ENCODE measurements at regions of chr11 and their contacts with region 1.

Region 1: DNA sequence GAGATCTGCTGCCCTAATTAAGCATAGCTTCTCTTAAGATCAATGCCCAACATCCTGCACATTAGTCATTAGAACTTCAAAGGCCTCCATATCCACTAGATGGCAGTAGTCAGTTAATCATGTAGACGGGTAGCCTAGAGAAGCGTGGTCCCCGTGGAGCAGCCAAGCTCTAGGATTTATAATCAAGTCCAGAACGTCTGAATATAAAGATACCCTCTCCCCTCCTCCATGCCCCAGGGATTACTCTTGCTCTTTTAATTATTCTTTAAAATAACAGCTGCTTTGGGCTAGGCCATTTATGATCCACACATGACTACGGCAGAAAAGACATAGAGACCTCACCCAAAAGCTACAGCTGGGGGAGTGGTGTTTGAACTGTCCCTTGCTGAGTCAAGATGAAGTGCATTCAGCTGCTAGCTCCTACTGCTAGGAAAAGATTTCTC is 327.6 kb upstream of the PLET1 start:
- DNase-seq: peak; percentile 69 to 81
- H3K4me3 ChIP-seq: no peak overlapping the region
- H3K4me3 Mint-ChIP-seq: no peak overlapping the region
- H3K27ac Mint-ChIP-seq: no peak overlapping the region
- H3K4me1 ChIP-seq: no peaks in the 10 kb centered on the region
- H3K4me1 Mint-ChIP-seq: no peaks in the 10 kb centered on the region
- H3K27me3 ChIP-seq: no peaks in the 10 kb centered on the region; the same call in none of the 2 replicates
- H3K27me3 Mint-ChIP-seq: peaks cover 14% of the 10 kb centered on the region
- CTCF ChIP-seq: peak; percentile 74 to 90

Region 2: GRCh38 chr11:112289588-112290492 is 298.4 kb before region 1 on chr11:
- CTCF ChIA-PET with region 1: no interaction called
- POLR2A ChIA-PET with region 1: no interaction called
- intact Hi-C with region 1: loop called (anchors 1 kb)
- DNase-seq: peak; percentile 79 to 94
- H3K4me3 ChIP-seq: peak overlapping the region; percentile 47
- H3K4me3 Mint-ChIP-seq: peak overlapping the region; percentile 68
- H3K27ac Mint-ChIP-seq: no peak overlapping the region
- H3K4me1 ChIP-seq: 0 out of 2 replicates have a peak, but pooled peaks cover 3% of the 10 kb centered on the region
- H3K4me1 Mint-ChIP-seq: no peaks in the 10 kb centered on the region
- H3K27me3 ChIP-seq: peaks cover 1% of the 10 kb centered on the region; the same call in 1 of the 2 replicates
- H3K27me3 Mint-ChIP-seq: peaks cover 25% of the 10 kb centered on the region
- CTCF ChIP-seq: peak; percentile 88 to 95

Region 3: GRCh38 chr11:112440518-112440917 is 147.8 kb before region 1 on chr11:
- CTCF ChIA-PET with region 1: interaction called, 12 read pairs
- POLR2A ChIA-PET with region 1: no interaction called
- intact Hi-C with region 1: loop called (anchors 1 kb)
- DNase-seq: peak in 1 of 2 experiments; percentile 38
- H3K4me3 ChIP-seq: no peak overlapping the region
- H3K4me3 Mint-ChIP-seq: no peak overlapping the region
- H3K27ac Mint-ChIP-seq: no peak overlapping the region
- H3K4me1 ChIP-seq: no peaks in the 10 kb centered on the region
- H3K4me1 Mint-ChIP-seq: no peaks in the 10 kb centered on the region
- H3K27me3 ChIP-seq: no peaks in the 10 kb centered on the region
- H3K27me3 Mint-ChIP-seq: peaks cover 25% of the 10 kb centered on the region
- CTCF ChIP-seq: peak; percentile 49 to 83

Region 4: GRCh38 chr11:112631333-112631732 is 43.1 kb after region 1 on chr11:
- CTCF ChIA-PET with region 1: no interaction called
- POLR2A ChIA-PET with region 1: no interaction called
- intact Hi-C with region 1: no loop called
- DNase-seq: no peak
- H3K4me3 ChIP-seq: no peak overlapping the region
- H3K4me3 Mint-ChIP-seq: no peak overlapping the region
- H3K27ac Mint-ChIP-seq: no peak overlapping the region
- H3K4me1 ChIP-seq: no peaks in the 10 kb centered on the region
- H3K4me1 Mint-ChIP-seq: no peaks in the 10 kb centered on the region
- H3K27me3 ChIP-seq: no peaks in the 10 kb centered on the region
- H3K27me3 Mint-ChIP-seq: peaks cover 27% of the 10 kb centered on the region
- CTCF ChIP-seq: no peak

Region 5: GRCh38 chr11:112769170-112769569 is 180.9 kb after region 1 on chr11:
- CTCF ChIA-PET with region 1: no interaction called
- POLR2A ChIA-PET with region 1: no interaction called
- intact Hi-C with region 1: no loop called
- DNase-seq: no peak
- H3K4me3 ChIP-seq: no peak overlapping the region
- H3K4me3 Mint-ChIP-seq: no peak overlapping the region
- H3K27ac Mint-ChIP-seq: no peak overlapping the region
- H3K4me1 ChIP-seq: no peaks in the 10 kb centered on the region
- H3K4me1 Mint-ChIP-seq: no peaks in the 10 kb centered on the region
- H3K27me3 ChIP-seq: peaks cover 2% of the 10 kb centered on the region
- H3K27me3 Mint-ChIP-seq: peaks cover 25% of the 10 kb centered on the region
- CTCF ChIP-seq: no peak

Region 6: DNA sequence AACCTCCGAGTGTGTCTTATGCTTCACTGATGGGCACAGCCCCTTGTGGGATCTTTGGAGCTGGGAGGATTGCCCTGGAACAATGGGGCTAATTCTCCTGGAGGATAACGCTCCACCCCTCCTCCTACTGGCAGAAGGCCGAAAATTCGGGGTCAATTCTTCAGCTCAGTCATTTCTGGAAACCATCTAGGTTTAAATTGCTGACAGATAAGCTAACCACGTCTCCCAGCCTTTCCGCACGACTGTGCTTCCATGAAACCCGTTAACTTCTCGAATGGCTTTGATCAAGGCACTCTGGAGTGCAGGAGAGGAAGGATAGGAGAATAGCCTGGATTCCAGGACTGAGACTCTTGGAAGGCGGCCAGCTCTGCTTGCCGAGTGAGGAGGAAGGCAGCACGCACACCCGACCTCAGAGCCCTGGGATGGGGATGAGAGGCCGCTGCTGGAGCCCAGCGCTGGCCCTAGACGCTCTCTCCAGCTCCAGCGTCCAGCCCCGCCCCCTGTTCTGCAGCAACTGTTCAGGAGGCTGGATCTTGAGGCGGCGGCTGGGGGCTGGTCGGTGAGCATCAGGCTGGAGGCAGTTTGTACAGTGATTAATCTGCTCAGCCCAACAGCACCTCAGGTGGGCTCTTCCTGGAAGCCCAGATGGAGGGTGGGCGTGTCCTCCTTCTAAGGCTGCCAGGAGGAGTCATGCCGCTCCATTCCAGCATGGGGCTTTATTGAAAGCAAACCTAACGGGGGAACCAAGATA is 196.2 kb after region 1 on chr11:
- CTCF ChIA-PET with region 1: interaction called, 10 read pairs
- POLR2A ChIA-PET with region 1: no interaction called
- intact Hi-C with region 1: no loop called
- DNase-seq: no peak
- H3K4me3 ChIP-seq: no peak overlapping the region
- H3K4me3 Mint-ChIP-seq: no peak overlapping the region
- H3K27ac Mint-ChIP-seq: no peak overlapping the region
- H3K4me1 ChIP-seq: no peaks in the 10 kb centered on the region
- H3K4me1 Mint-ChIP-seq: no peaks in the 10 kb centered on the region
- H3K27me3 ChIP-seq: peaks cover 2% of the 10 kb centered on the region
- H3K27me3 Mint-ChIP-seq: peaks cover 24% of the 10 kb centered on the region
- CTCF ChIP-seq: no peak

Region 7: DNA sequence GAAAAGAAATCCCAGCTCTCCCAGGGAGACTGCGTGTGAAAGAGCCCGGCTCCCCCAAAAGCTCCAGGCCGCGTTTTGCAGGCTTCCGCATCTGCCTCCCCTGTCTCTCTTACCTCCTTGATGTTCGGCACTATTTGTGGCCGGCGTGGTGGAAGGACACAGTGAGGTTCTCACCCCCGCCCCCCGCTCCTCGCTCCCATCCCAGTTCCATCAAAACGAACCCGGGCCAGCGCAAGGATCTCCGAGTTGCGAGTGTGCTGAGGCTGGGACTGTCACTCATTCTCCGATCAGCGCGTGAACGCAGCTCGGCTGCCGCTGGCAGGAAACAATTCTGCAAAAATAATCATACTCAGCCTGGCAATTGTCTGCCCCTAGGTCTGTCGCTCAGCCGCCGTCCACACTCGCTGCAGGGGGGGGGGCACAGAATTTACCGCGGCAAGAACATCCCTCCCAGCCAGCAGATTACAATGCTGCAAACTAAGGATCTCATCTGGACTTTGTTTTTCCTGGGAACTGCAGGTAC is 372.9 kb after region 1 on chr11 and contains the start of gene NCAM1:
- CTCF ChIA-PET with region 1: interaction called, 3 read pairs
- POLR2A ChIA-PET with region 1: no interaction called
- intact Hi-C with region 1: loop called (anchors 10 kb)
- DNase-seq: peak; percentile 78 to 89
- H3K4me3 ChIP-seq: peak within 1 kb of the TSS; percentile 36
- H3K4me3 Mint-ChIP-seq: peak within 1 kb of the TSS; percentile 74
- H3K27ac Mint-ChIP-seq: no peak within 1 kb of the TSS
- H3K4me1 ChIP-seq: 0 out of 2 replicates have a peak, but pooled peaks cover 5% of the 10 kb centered on the region
- H3K4me1 Mint-ChIP-seq: peaks cover 4% of the 10 kb centered on the region
- H3K27me3 ChIP-seq: peaks cover 2% of the 10 kb centered on the region
- H3K27me3 Mint-ChIP-seq: peaks cover 49% of the 10 kb centered on the region
- CTCF ChIP-seq: no peak
- total RNA-seq, gene NCAM1: 0.95 and 1.1 TPM in 2 replicates

Region 8: GRCh38 chr11:113289431-113290187 is 701.3 kb after region 1 on chr11:
- CTCF ChIA-PET with region 1: interaction called, 63 read pairs
- POLR2A ChIA-PET with region 1: no interaction called
- intact Hi-C with region 1: loop called (anchors 1 kb)
- DNase-seq: peak; percentile 70 to 82
- H3K4me3 ChIP-seq: no peak overlapping the region
- H3K4me3 Mint-ChIP-seq: no peak overlapping the region
- H3K27ac Mint-ChIP-seq: no peak overlapping the region
- H3K4me1 ChIP-seq: peaks cover 15% of the 10 kb centered on the region
- H3K4me1 Mint-ChIP-seq: peaks cover 26% of the 10 kb centered on the region
- H3K27me3 ChIP-seq: no peaks in the 10 kb centered on the region
- H3K27me3 Mint-ChIP-seq: peaks cover 2% of the 10 kb centered on the region
- CTCF ChIP-seq: peak; percentile 95 to 99

Region 9: GRCh38 chr11:113384551-113384950 is 796.3 kb after region 1 on chr11:
- CTCF ChIA-PET with region 1: no interaction called
- POLR2A ChIA-PET with region 1: no interaction called
- intact Hi-C with region 1: no loop called
- DNase-seq: peak; percentile 86 to 90
- H3K4me3 ChIP-seq: no peak overlapping the region
- H3K4me3 Mint-ChIP-seq: no peak overlapping the region
- H3K27ac Mint-ChIP-seq: no peak overlapping the region
- H3K4me1 ChIP-seq: peaks cover 15% of the 10 kb centered on the region
- H3K4me1 Mint-ChIP-seq: no peaks in the 10 kb centered on the region
- H3K27me3 ChIP-seq: no peaks in the 10 kb centered on the region
- H3K27me3 Mint-ChIP-seq: no peaks in the 10 kb centered on the region
- CTCF ChIP-seq: no peak